MCF 10A (cell line): ENCODE measurements at regions of chr1 and their contacts with region 1.

Region 1: DNA sequence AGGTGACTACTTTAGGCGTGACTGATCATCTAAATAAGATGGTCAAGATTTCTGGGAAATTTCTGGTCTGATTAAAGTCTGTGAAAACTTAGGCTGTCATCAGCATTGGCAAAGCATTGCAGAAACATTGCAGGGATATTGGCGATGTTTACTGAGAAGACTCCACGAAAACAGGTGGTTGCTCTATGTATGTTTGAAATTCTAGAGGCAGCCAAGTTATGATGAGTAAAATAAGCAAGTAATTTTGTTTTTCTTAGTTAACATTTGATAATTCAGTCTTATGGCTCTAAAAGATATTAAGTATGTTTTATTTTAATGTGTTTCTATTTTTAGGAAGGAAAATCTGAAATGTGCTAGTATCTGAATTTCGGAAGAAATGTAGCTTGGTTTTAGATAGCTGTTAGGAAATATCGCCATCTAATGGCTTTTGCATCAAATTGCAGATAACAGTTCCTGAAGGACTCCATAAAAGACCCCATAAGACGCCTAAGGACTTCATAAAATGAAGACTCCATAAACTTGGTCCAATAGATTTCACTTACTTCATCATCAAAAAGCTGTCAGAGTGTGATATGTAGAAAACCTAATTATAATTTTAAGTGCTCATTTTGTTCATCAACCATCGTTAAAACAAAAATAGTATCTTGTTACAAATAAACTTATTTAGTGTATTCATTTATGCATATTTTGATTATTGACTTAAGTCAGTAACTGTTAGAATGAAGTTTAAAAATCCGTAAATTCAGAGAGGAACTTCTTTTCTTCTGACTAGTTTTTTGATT is 344.6 kb downstream of the RYR2 start:
- DNase-seq: peak; percentile 54
- H3K4me3 Mint-ChIP-seq: no peak overlapping the region
- H3K27ac Mint-ChIP-seq: no peak overlapping the region
- H3K4me1 Mint-ChIP-seq: peaks cover 6% of the 10 kb centered on the region
- H3K27me3 Mint-ChIP-seq: peaks cover 16% of the 10 kb centered on the region
- CTCF ChIP-seq: peak; percentile 99

Region 2: DNA sequence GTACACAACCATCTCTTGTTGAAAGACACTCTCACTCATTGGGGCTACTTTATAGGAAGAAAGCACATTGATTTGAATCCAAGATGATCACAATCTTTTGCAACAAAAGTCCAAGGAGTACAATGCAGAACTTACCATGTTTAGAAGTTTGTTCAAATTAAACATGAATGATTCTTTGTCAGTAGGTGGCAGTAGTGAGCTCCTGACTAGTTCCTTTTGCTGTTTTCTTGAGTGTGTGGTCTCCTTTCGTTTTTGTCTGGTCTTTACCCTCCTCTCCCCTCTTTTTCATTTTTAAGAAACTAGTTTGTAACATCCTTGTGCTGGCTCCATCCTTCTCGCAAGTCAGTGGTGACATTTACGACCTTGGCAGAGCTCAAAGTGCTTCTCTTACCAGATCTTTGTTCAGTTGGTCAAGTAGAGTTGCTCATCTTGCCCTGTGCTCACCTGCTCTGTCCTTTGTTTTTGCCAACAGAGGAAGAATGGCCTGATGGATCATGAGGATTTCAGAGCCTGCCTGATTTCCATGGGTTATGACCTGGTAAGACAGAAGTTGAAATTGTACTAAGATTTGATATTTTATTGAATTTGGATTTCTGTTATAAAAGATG is 627.2 kb before region 1 on chr1:
- CTCF ChIA-PET with region 1: interaction called, 29 read pairs
- POLR2A ChIA-PET with region 1: no interaction called
- intact Hi-C with region 1: loop called (anchors 1 kb)
- DNase-seq: peak; percentile 81
- H3K4me3 Mint-ChIP-seq: no peak overlapping the region
- H3K27ac Mint-ChIP-seq: no peak overlapping the region
- H3K4me1 Mint-ChIP-seq: no peaks in the 10 kb centered on the region
- H3K27me3 Mint-ChIP-seq: no peaks in the 10 kb centered on the region
- CTCF ChIP-seq: peak; percentile 90

Region 3: GRCh38 chr1:236868625-236869467 is 517.7 kb before region 1 on chr1:
- CTCF ChIA-PET with region 1: interaction called, 61 read pairs
- POLR2A ChIA-PET with region 1: interaction called, 3 read pairs
- intact Hi-C with region 1: loop called (anchors 1 kb)
- DNase-seq: peak; percentile 76
- H3K4me3 Mint-ChIP-seq: no peak overlapping the region
- H3K27ac Mint-ChIP-seq: no peak overlapping the region
- H3K4me1 Mint-ChIP-seq: peaks cover 5% of the 10 kb centered on the region
- H3K27me3 Mint-ChIP-seq: no peaks in the 10 kb centered on the region
- CTCF ChIP-seq: peak; percentile 99

Region 4: DNA sequence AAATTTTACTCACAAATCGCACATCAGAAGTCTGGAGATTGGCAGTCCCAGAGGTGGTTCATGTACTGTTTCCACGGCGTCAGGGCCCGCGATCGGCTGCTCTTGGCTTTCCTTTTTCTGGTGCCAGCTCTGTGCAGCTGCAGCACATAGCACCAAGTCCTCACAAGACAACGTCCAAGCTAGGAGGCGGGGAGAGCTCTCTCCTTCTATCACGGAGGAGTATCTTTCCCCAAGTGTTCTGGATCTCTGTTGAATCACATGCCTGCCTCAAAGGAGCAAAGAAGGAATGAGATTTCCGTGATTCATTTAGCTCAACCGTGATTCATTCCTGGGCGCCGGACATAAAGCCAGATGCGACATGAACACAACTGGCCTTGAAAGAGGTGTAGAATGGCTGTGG is 407.8 kb before region 1 on chr1:
- CTCF ChIA-PET with region 1: interaction called, 4 read pairs
- POLR2A ChIA-PET with region 1: no interaction called
- intact Hi-C with region 1: loop called (anchors 1 kb)
- DNase-seq: no peak
- H3K4me3 Mint-ChIP-seq: no peak overlapping the region
- H3K27ac Mint-ChIP-seq: no peak overlapping the region
- H3K4me1 Mint-ChIP-seq: no peaks in the 10 kb centered on the region
- H3K27me3 Mint-ChIP-seq: peaks cover 11% of the 10 kb centered on the region
- CTCF ChIP-seq: no peak

Region 5: GRCh38 chr1:237108297-237109040 is 278.1 kb before region 1 on chr1:
- CTCF ChIA-PET with region 1: no interaction called
- POLR2A ChIA-PET with region 1: no interaction called
- intact Hi-C with region 1: no loop called
- DNase-seq: no peak
- H3K4me3 Mint-ChIP-seq: no peak overlapping the region
- H3K27ac Mint-ChIP-seq: no peak overlapping the region
- H3K4me1 Mint-ChIP-seq: no peaks in the 10 kb centered on the region
- H3K27me3 Mint-ChIP-seq: peaks cover 35% of the 10 kb centered on the region
- CTCF ChIP-seq: no peak

Region 6: DNA sequence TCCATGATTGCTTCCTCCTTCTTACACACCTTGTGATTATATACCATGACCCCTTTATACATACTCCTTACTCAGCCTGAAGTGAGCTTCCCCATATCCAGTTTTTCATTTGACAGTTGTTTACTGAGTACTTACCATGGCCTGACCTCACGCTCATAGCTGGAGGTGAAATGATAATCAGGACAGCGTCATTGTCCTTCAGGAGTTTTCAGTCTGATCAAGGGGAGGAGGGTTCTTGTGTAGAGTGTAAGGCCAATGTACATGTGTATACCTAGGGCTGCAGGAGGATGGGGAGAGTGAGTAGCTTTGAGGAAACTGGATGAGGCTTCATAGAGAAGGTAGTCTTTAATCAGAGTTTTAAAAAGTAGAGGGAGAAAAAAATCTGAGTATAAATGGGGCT is 18.8 kb before region 1 on chr1:
- CTCF ChIA-PET with region 1: interaction called, 36 read pairs
- POLR2A ChIA-PET with region 1: interaction called, 3 read pairs
- intact Hi-C with region 1: no loop called
- DNase-seq: no peak
- H3K4me3 Mint-ChIP-seq: no peak overlapping the region
- H3K27ac Mint-ChIP-seq: no peak overlapping the region
- H3K4me1 Mint-ChIP-seq: no peaks in the 10 kb centered on the region
- H3K27me3 Mint-ChIP-seq: peaks cover 58% of the 10 kb centered on the region
- CTCF ChIP-seq: no peak

Region 7: GRCh38 chr1:237556911-237557310 is 170.4 kb after region 1 on chr1:
- CTCF ChIA-PET with region 1: interaction called, 31 read pairs
- POLR2A ChIA-PET with region 1: interaction called, 6 read pairs
- intact Hi-C with region 1: loop called (anchors 1 kb)
- DNase-seq: peak; percentile 17
- H3K4me3 Mint-ChIP-seq: no peak overlapping the region
- H3K27ac Mint-ChIP-seq: no peak overlapping the region
- H3K4me1 Mint-ChIP-seq: no peaks in the 10 kb centered on the region
- H3K27me3 Mint-ChIP-seq: no peaks in the 10 kb centered on the region
- CTCF ChIP-seq: no peak